GM10248 (cell line): ENCODE measurements at regions of chr5 and their contacts with region 1.

Region 1: DNA sequence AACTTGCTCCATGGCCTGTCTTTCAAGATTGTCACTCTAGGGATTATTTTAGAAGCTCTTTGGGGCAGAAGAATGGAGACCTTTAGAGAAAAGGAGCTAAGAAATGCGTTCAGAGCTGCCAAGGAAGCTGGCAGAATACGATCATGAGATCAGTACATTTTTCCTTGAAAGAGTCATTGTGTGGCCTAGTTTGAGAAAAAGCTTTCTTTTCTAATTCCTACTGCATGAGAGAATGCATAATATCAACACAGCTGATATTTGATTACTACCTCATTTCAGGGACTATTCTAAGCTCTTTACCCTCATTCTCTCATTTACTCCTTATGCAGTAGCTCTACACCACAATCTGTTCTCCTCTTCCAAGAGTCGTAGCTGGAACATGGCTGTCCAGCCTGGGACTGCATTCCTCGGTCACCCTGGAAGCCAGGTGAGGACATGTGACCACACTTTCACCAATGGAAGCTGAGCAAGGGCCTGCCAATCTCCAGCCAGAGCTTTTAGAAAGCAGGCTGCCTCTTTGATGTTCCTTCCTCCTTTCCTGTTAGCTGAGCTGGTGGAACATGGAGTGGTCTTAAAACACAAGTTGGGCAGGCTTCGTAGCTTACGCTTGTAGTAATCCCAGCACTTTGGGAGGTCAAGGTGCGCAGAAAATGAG is 99.3 kb upstream of the LHFPL2 start:
- DNase-seq: no peak
- CTCF ChIP-seq: no peak

Region 2: GRCh38 chr5:78735834-78736459 is 11.9 kb before region 1 on chr5:
- CTCF ChIA-PET with region 1: interaction called, 12 read pairs
- POLR2A ChIA-PET with region 1: no interaction called
- DNase-seq: no peak
- CTCF ChIP-seq: no peak